Activated CD4-positive, alpha-beta T cell treated with anti-CD3 and anti-CD28 coated beads, Interleukin-2, amount 10 ng/mL, durations not matched to agents 24 days and 14 days (primary cell): ENCODE measurements at regions of chr1 and their contacts with region 1.

Region 1: GRCh38 chr1:37989361-37989930 is 376 bp downstream of the SF3A3 start:
- DNase-seq: peak; percentile 87
- H3K4me3 Mint-ChIP-seq: peak overlapping the region; percentile 96
- H3K27ac Mint-ChIP-seq: peak overlapping the region; percentile 93
- H3K4me1 Mint-ChIP-seq: peaks cover 19% of the 10 kb centered on the region
- H3K27me3 Mint-ChIP-seq: no peaks in the 10 kb centered on the region

Region 2: GRCh38 chr1:38004284-38005108 is 15.1 kb after region 1 on chr1:
- intact Hi-C with region 1: loop called (anchors 1 kb)
- DNase-seq: peak; percentile 77
- H3K4me3 Mint-ChIP-seq: peak overlapping the region; percentile 99
- H3K27ac Mint-ChIP-seq: peak overlapping the region; percentile 93
- H3K4me1 Mint-ChIP-seq: peaks cover 47% of the 10 kb centered on the region
- H3K27me3 Mint-ChIP-seq: no peaks in the 10 kb centered on the region

Region 3: DNA sequence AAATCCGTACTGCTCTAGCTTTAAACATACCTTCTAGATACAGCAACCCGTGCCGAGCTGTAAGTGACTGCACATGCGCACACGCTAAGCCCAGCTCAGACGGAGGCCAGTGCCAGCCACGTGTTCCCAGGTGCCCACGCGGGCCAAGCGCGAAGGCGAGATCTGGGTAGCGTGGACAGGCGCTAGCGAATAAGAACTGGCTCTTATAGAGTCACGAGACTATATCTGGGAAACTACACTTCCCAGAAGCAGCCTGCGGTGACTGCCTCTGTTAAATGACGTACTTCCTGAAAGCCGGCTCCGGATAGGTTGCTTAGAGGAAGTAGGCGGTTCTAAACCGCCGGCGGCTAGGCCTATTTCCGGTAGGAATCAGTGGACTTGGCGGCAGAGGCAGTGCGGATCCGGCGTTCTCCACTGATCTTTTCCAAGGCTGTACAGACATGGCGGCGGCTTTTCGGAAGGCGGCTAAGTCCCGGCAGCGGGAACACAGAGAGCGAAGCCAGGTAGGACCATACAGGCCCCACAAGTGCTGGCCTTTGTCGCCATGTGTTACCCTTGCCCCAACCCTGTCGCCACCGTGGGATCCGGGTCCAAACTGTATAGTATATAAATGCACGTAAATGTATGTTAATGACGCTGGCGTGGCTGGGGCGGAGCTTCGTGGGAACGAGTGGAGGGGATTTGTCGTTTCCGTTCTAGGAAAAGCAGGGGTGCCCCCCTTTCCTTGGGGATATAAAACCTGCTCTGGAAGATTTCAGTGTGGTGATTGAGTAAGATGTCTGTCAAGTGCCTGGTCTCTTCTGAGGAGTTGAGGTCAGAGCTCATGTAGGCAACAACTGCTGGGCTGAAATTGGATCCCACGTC is 23.1 kb after region 1 on chr1 and contains the start of gene UTP11:
- intact Hi-C with region 1: loop called (anchors 1 kb)
- DNase-seq: peak; percentile 97
- H3K4me3 Mint-ChIP-seq: peak within 1 kb of the TSS; percentile 92
- H3K27ac Mint-ChIP-seq: peak within 1 kb of the TSS; percentile 95
- H3K4me1 Mint-ChIP-seq: peaks cover 46% of the 10 kb centered on the region
- H3K27me3 Mint-ChIP-seq: no peaks in the 10 kb centered on the region
- total RNA-seq, gene UTP11: 99.5 and 111 TPM in 2 replicates

Region 4: GRCh38 chr1:38018864-38019343 is 29.5 kb after region 1 on chr1:
- intact Hi-C with region 1: loop called (anchors 1 kb)
- DNase-seq: no peak
- H3K4me3 Mint-ChIP-seq: no peak overlapping the region
- H3K27ac Mint-ChIP-seq: no peak overlapping the region
- H3K4me1 Mint-ChIP-seq: peaks cover 13% of the 10 kb centered on the region
- H3K27me3 Mint-ChIP-seq: no peaks in the 10 kb centered on the region